ENCODE measurements at regions of chr3 and their contacts with region 1.

Region 1: GRCh38 chr3:50873376-50874157 is 198.8 kb downstream of the DOCK3 start:
- DNase-seq: no peak
- H3K4me3 ChIP-seq: no peak overlapping the region
- H3K27ac ChIP-seq: no peak overlapping the region
- H3K4me1 ChIP-seq: peaks cover 0 to 6% (median 3%) of the 10 kb centered on the region in 4 experiments; a peak in 4 of 7 replicates
- H3K27me3 ChIP-seq: no peaks in the 10 kb centered on the region
- CTCF ChIP-seq: no peak
- EP300 ChIP-seq: no peak
- POLR2A ChIP-seq: no peak
- RAD21 ChIP-seq: no peak

Region 2: DNA sequence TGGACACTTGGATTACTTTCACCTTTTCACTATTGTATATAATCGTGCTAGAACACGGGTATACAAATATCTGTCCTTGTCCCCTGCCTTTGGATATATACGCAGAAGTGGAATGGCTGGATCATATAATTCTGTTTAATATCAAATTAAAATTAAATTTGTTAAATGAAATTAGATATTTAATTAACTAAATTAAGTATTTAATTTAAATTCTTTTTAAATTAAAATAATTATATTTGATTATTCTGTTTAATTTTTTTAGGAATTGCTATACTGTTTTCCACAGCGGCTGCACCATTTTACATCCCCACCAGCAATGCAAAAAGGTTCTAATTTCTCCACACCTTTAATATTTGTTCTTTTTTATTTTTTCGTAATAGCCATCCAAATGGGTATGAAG is 114.6 kb before region 1 on chr3:
- CTCF ChIA-PET with region 1: no interaction called
- POLR2A ChIA-PET with region 1: no interaction called
- DNase-seq: no peak
- H3K4me3 ChIP-seq: no peak overlapping the region
- H3K27ac ChIP-seq: no peak overlapping the region
- H3K4me1 ChIP-seq: no peaks in the 10 kb centered on the region
- H3K27me3 ChIP-seq: no peaks in the 10 kb centered on the region
- CTCF ChIP-seq: no peak
- EP300 ChIP-seq: no peak
- POLR2A ChIP-seq: no peak
- RAD21 ChIP-seq: no peak

Region 3: DNA sequence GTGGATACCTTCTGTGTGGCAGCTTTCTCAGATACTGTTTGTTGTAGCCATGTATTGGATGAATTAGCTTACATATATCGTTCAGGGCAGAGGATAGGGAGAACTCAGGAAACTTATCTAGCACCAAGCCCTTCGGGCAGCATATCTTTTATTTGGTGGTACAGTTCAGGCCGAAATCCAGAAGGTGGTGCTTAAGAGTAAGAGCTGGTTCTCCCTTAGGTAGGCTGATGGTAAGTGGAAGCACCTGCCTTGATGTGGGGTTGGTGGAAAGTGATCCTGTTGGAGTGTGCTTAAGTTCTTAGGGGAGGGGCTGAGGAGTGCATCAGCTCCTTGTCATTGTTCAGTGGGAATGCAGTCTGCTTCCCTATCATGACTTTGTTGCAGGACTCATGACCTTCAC is 11.3 kb before region 1 on chr3:
- CTCF ChIA-PET with region 1: interaction called, 10 read pairs
- POLR2A ChIA-PET with region 1: no interaction called
- DNase-seq: peak in 1 of 2 experiments; percentile 10
- H3K4me3 ChIP-seq: no peak overlapping the region
- H3K27ac ChIP-seq: no peak overlapping the region
- H3K4me1 ChIP-seq: no peaks in the 10 kb centered on the region
- H3K27me3 ChIP-seq: no peaks in the 10 kb centered on the region
- CTCF ChIP-seq: peak in 2 of 3 experiments; percentile 50 to 55; a peak in 3 of 4 replicates
- EP300 ChIP-seq: no peak
- POLR2A ChIP-seq: no peak
- RAD21 ChIP-seq: peak; percentile 58 to 68

Measured in H1 (cell line).